ENCODE measurements at regions of chr1 and their contacts with region 1.

Region 1: DNA sequence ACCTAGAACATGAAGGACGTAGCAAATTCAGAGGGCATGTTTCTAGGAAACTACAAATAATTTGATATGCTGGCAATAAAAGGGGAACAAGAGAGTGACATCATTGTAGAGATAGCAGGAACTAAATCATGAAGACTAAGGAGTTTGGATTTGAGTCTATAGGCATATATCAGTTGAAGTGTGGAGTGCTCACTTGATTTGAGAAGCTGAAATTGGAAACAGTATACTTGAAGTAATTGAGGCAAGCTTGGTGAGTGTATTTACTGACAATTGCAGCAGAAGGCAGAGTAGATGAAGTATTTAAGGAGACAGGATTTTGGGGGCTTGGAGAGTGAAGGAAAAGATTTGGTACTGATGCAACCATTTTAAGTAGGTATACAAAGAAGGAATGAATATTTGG is 6.4 kb upstream of the TMCO2 start:
- DNase-seq: no peak
- H3K4me3 ChIP-seq: no peak overlapping the region
- H3K4me3 Mint-ChIP-seq: peak overlapping the region in 6 of 8 donors; percentile 8 to 52 (median 26)
- H3K27ac ChIP-seq: no peak overlapping the region
- H3K27ac Mint-ChIP-seq: peak overlapping the region; percentile 34 to 90 (median 65)
- H3K4me1 ChIP-seq: peaks cover 16% of the 10 kb centered on the region
- H3K4me1 Mint-ChIP-seq: peaks cover 12 to 32% (median 16%) of the 10 kb centered on the region in 4 donors
- H3K27me3 ChIP-seq: no peaks in the 10 kb centered on the region
- H3K27me3 Mint-ChIP-seq: no peaks in the 10 kb centered on the region

Region 2: GRCh38 chr1:40257688-40258444 is 16.5 kb after region 1 on chr1 and contains the start of gene ZMPSTE24:
- CTCF ChIA-PET with region 1: interaction called, 3 read pairs
- POLR2A ChIA-PET with region 1: interaction called, 45 read pairs
- intact Hi-C with region 1: loop called (anchors 1 kb)
- DNase-seq: peak; percentile 95 to 99 (median 96)
- H3K4me3 ChIP-seq: peak within 1 kb of the TSS; percentile 86 to 99
- H3K4me3 Mint-ChIP-seq: peak within 1 kb of the TSS; percentile 92 to 99 (median 96)
- H3K27ac ChIP-seq: peak within 1 kb of the TSS; percentile 98
- H3K27ac Mint-ChIP-seq: peak within 1 kb of the TSS; percentile 98 to 100 (median 99)
- H3K4me1 ChIP-seq: peaks cover 37% of the 10 kb centered on the region
- H3K4me1 Mint-ChIP-seq: peaks cover 25 to 58% (median 38%) of the 10 kb centered on the region in 4 donors
- H3K27me3 ChIP-seq: no peaks in the 10 kb centered on the region
- H3K27me3 Mint-ChIP-seq: no peaks in the 10 kb centered on the region
- total RNA-seq, gene ZMPSTE24: 19.7 to 21.0 TPM

Measured in CD4-positive, alpha-beta memory T cell (primary cell).